Activated naive CD4-positive, alpha-beta T cell treated with anti-CD3 and anti-CD28 coated beads, Interleukin-2, amount 10 ng/mL, durations not matched to agents 7 days and 5 days (primary cell): ENCODE measurements at regions of chr19 and their contacts with region 1.

Region 1: GRCh38 chr19:34974646-34975045 is 10.6 kb upstream of the ZNF792 start:
- DNase-seq: no peak
- H3K4me3 Mint-ChIP-seq: no peak overlapping the region
- H3K27ac Mint-ChIP-seq: no peak overlapping the region
- H3K4me1 Mint-ChIP-seq: peaks cover 21% of the 10 kb centered on the region
- H3K27me3 Mint-ChIP-seq: peaks cover 32% of the 10 kb centered on the region

Region 2: DNA sequence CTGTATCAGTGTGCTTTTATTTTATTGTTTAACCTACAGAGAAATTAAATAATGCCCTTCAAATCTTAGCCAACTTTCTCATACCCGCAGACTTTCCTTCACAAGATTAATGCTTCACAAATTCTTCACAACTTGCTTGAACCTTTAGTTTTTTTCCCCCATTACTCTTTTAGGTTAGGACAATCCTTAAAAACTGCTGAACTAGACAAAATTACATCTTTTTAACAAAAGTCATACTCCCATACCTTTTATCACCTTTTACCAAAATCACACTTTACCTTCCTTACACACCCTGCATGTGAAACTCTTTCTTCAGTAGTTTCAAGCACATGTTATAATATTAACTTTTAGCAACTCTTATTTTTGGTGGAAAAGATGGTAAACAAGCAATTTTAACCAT is 356.2 kb before region 1 on chr19:
- CTCF ChIA-PET with region 1: no interaction called
- DNase-seq: no peak
- H3K4me3 Mint-ChIP-seq: no peak overlapping the region
- H3K27ac Mint-ChIP-seq: no peak overlapping the region
- H3K4me1 Mint-ChIP-seq: no peaks in the 10 kb centered on the region
- H3K27me3 Mint-ChIP-seq: no peaks in the 10 kb centered on the region

Region 3: GRCh38 chr19:35006342-35007018 is 31.8 kb after region 1 on chr19:
- CTCF ChIA-PET with region 1: interaction called, 65 read pairs
- DNase-seq: no peak
- H3K4me3 Mint-ChIP-seq: no peak overlapping the region
- H3K27ac Mint-ChIP-seq: peak overlapping the region; percentile 15
- H3K4me1 Mint-ChIP-seq: peaks cover 54% of the 10 kb centered on the region
- H3K27me3 Mint-ChIP-seq: no peaks in the 10 kb centered on the region